Endothelial cell of umbilical vein (primary cell): ENCODE measurements at regions of chr14 and their contacts with region 1.

Region 1: DNA sequence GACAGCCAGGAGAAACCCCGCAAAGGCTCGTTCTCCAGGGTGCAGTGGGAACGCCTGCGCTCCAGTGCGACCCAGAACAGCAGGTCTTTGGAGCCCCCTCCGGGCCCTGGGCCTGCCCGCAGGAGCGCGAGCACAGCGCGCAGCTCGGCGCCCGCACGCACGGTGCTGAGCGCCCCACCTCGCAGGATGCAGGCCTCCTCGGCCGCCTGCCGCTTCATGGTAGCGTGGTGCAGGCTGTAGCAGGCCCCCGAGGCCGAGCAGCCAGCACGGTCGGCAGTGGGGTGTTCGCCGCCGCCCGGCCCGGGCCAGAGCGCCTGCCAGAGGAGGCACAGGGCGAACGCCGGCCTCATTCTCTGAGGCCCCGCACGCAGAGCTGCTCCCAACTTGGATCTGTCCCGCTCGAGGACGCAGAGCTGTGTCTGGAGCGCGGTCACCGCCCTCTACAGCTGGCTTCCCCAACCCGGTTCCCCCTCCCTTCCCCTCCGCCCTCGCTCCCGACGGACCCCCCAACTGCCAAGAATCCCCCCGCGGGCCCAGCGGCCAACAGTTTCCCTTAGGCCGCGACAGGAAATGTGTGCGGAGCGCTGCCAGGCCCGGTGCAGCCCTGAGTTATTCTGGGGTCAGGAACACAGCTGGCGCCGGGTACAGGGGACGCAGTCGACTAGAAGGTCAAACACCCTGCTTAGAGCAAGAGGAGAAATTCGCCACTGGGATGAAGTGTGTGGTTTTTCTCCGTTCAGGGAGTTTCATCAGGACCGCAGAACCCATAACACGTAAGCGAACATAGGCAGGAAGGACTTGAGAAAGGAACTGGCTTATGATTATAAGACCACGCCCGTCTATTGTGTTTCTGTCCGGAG is at the start of gene CLEC14A:
- DNase-seq: peak; percentile 100
- H3K4me3 ChIP-seq: peak within 1 kb of the TSS; percentile 86 to 100 (median 99)
- H3K27ac ChIP-seq: peak within 1 kb of the TSS; percentile 89
- H3K4me1 ChIP-seq: peaks cover 20% of the 10 kb centered on the region
- H3K27me3 ChIP-seq: no peaks in the 10 kb centered on the region
- CTCF ChIP-seq: no peak
- POLR2A ChIP-seq: peak; percentile 87
- total RNA-seq, gene CLEC14A: 396 and 414 TPM in 2 replicates

Region 2: DNA sequence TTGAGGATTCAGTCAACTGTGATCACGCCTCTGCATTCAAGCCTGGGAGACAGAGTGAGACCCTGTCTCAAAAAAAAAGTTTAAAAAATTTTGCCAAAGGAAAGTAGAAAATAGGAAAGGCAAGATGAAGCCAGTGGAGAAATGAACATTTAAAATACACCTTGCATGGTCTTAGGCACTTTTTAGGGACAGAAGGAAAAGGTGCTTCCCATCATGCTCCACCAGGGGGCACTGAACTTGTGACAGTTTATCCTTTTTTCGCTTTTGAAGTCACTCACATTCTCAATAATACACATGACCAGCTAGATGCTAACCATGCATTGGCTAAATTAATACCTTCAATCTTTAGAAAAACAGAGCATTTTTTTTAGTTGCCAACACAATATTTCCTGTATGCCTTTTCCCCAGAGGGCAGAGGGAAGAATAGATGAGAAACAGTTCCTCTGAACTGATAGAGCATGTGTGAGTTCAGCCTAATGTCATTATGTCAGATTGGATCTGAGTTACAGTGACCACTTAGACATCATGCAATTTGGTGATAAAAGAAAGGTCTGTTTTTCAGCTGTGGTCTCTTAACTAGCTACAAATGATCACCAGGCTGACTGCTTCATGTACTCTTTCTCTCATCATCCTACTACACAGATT is 270.0 kb before region 1 on chr14:
- CTCF ChIA-PET with region 1: interaction called, 3 read pairs
- POLR2A ChIA-PET with region 1: no interaction called
- dilution Hi-C with region 1: no loop called
- intact Hi-C with region 1: loop called (anchors 5 kb)
- DNase-seq: peak; percentile 67
- H3K4me3 ChIP-seq: no peak overlapping the region
- H3K27ac ChIP-seq: no peak overlapping the region
- H3K4me1 ChIP-seq: no peaks in the 10 kb centered on the region
- H3K27me3 ChIP-seq: no peaks in the 10 kb centered on the region
- CTCF ChIP-seq: peak; percentile 63 to 83
- POLR2A ChIP-seq: no peak

Region 3: GRCh38 chr14:38309522-38310277 is 53.8 kb after region 1 on chr14:
- CTCF ChIA-PET with region 1: interaction called, 3 read pairs
- POLR2A ChIA-PET with region 1: interaction called, 10 read pairs
- dilution Hi-C with region 1: no loop called
- intact Hi-C with region 1: loop called (anchors 1 kb)
- DNase-seq: no peak
- H3K4me3 ChIP-seq: peak overlapping the region in 1 of 3 experiments; percentile 23
- H3K27ac ChIP-seq: peak overlapping the region; percentile 74
- H3K4me1 ChIP-seq: peaks cover 40% of the 10 kb centered on the region
- H3K27me3 ChIP-seq: no peaks in the 10 kb centered on the region
- CTCF ChIP-seq: no peak
- POLR2A ChIP-seq: no peak

Region 4: DNA sequence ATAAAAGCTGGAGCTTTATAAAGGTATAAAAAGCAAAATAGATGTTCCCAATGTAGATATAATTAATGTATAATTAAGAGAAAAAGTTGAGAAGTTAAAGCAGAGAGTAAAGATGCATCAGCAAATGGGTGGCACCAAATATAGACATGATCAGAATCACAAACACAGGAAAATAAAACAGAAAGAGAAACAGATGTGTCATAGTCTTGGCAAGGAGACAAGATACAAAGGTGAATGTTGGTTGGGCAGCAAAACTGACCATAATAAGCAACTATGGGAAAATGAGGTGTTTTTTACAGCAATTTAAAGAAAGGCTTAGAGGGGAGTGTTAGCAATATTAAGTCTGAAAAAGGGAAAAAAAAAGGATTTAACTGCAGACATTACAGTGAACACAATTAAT is 135.4 kb after region 1 on chr14:
- CTCF ChIA-PET with region 1: interaction called, 3 read pairs
- POLR2A ChIA-PET with region 1: interaction called, 10 read pairs
- dilution Hi-C with region 1: no loop called
- intact Hi-C with region 1: no loop called
- DNase-seq: peak; percentile 89
- H3K4me3 ChIP-seq: peak overlapping the region in 1 of 3 experiments; percentile 10
- H3K27ac ChIP-seq: peak overlapping the region; percentile 69
- H3K4me1 ChIP-seq: peaks cover 19% of the 10 kb centered on the region
- H3K27me3 ChIP-seq: no peaks in the 10 kb centered on the region
- CTCF ChIP-seq: no peak
- POLR2A ChIP-seq: no peak

Region 5: DNA sequence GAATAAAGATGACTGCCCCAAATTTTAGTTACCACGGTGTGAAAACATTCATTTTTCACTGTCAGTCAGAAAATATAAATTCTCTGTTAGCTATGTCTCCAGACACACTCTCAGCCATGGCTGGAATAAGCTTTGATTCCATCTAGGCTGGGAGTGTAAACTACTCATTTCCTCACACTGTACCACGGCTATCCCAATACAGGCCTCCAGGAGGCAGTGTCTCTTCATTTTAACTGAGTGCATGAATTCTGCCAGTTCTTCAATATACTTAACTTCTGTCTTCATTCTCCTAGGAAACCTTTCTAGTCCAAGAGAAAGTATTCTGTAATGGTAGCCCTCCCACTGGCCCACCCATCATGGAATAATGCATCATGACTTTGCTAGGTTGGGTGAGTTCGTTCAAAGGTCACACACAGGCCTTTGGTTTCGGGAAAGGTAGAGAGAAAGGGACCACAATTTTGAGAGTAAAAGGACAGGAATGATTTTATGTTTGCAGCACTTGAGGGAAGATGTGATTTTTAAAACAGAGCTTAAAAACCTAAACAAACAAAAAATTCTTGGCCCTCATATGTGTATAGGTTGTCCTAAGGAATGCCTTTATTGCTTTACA is 466.0 kb after region 1 on chr14:
- CTCF ChIA-PET with region 1: interaction called, 4 read pairs
- POLR2A ChIA-PET with region 1: no interaction called
- dilution Hi-C with region 1: no loop called
- intact Hi-C with region 1: loop called (anchors 2 kb)
- DNase-seq: peak; percentile 89
- H3K4me3 ChIP-seq: no peak overlapping the region
- H3K27ac ChIP-seq: no peak overlapping the region
- H3K4me1 ChIP-seq: no peaks in the 10 kb centered on the region
- H3K27me3 ChIP-seq: no peaks in the 10 kb centered on the region
- CTCF ChIP-seq: peak; percentile 72 to 78
- POLR2A ChIP-seq: no peak

Region 6: GRCh38 chr14:38989922-38990546 is 734.1 kb after region 1 on chr14:
- CTCF ChIA-PET with region 1: no interaction called
- POLR2A ChIA-PET with region 1: interaction called, 4 read pairs
- dilution Hi-C with region 1: no loop called
- intact Hi-C with region 1: loop called (anchors 1 kb)
- DNase-seq: peak; percentile 15
- H3K4me3 ChIP-seq: no peak overlapping the region
- H3K27ac ChIP-seq: no peak overlapping the region
- H3K4me1 ChIP-seq: peaks cover 38% of the 10 kb centered on the region
- H3K27me3 ChIP-seq: no peaks in the 10 kb centered on the region
- CTCF ChIP-seq: no peak
- POLR2A ChIP-seq: no peak